ENCODE measurements at regions of chr11 and their contacts with region 1.

Region 1: GRCh38 chr11:57527056-57527631 is 3.4 kb downstream of the TIMM10 start:
- DNase-seq: peak; percentile 55 to 79
- ATAC-seq: peak in 2 of 4 donors; percentile 31 to 39
- H3K4me3 ChIP-seq: no peak overlapping the region
- H3K27ac ChIP-seq: no peak overlapping the region
- H3K4me1 ChIP-seq: peaks cover 15% of the 10 kb centered on the region
- H3K27me3 ChIP-seq: no peaks in the 10 kb centered on the region
- CTCF ChIP-seq: peak; percentile 96

Region 2: DNA sequence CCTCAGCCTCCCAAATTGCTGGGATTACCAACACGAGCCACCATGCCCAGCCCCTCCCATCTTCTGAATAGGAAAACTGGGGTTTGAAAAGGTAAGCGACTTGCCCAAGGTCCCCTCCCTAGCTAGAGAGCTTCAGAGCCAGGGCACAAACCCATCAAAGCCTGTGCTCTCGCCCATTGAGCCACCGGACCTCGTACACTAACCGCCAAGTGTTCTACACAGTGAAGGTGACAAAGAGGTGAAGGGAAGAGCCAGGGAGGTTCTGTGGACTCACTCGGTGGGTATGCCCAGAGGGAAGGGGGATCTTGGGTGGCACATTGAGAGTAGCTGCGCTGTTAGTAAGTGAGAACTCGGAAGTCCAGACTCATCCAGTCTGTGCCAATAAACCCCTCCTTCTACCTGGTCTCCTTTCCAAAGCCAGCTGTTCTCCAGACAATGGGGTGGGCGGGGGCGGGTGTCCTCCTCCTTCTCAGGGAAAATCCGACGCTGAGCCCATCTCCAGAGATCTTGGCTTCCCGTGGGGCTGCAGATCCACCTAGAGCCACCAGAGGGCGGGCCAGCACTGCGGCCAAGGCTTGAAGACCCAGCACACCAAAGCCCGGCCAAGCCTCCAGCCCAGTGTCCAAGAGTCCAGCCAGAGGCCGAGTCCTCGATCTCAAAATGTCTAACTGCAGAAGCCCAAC is 70.0 kb before region 1 on chr11:
- intact Hi-C with region 1: loop called (anchors 1 to 5 kb)
- DNase-seq: peak; percentile 92 to 95
- ATAC-seq: peak; percentile 89 to 96 (median 94)
- H3K4me3 ChIP-seq: peak overlapping the region; percentile 4
- H3K27ac ChIP-seq: no peak overlapping the region
- H3K4me1 ChIP-seq: peaks cover 19% of the 10 kb centered on the region
- H3K27me3 ChIP-seq: peaks cover 0 to 38% (median 18%) of the 10 kb centered on the region in 3 donors
- CTCF ChIP-seq: peak; percentile 99

Region 3: GRCh38 chr11:57480409-57481137 is 46.6 kb before region 1 on chr11:
- intact Hi-C with region 1: loop called in 1 of 2 experiments (anchors 5 kb)
- DNase-seq: peak; percentile 66 to 82
- ATAC-seq: peak; percentile 31 to 46 (median 36)
- H3K4me3 ChIP-seq: no peak overlapping the region
- H3K27ac ChIP-seq: no peak overlapping the region
- H3K4me1 ChIP-seq: peaks cover 10% of the 10 kb centered on the region
- H3K27me3 ChIP-seq: peaks cover 0 to 6% (median 5%) of the 10 kb centered on the region in 3 donors
- CTCF ChIP-seq: peak; percentile 68

Region 4: DNA sequence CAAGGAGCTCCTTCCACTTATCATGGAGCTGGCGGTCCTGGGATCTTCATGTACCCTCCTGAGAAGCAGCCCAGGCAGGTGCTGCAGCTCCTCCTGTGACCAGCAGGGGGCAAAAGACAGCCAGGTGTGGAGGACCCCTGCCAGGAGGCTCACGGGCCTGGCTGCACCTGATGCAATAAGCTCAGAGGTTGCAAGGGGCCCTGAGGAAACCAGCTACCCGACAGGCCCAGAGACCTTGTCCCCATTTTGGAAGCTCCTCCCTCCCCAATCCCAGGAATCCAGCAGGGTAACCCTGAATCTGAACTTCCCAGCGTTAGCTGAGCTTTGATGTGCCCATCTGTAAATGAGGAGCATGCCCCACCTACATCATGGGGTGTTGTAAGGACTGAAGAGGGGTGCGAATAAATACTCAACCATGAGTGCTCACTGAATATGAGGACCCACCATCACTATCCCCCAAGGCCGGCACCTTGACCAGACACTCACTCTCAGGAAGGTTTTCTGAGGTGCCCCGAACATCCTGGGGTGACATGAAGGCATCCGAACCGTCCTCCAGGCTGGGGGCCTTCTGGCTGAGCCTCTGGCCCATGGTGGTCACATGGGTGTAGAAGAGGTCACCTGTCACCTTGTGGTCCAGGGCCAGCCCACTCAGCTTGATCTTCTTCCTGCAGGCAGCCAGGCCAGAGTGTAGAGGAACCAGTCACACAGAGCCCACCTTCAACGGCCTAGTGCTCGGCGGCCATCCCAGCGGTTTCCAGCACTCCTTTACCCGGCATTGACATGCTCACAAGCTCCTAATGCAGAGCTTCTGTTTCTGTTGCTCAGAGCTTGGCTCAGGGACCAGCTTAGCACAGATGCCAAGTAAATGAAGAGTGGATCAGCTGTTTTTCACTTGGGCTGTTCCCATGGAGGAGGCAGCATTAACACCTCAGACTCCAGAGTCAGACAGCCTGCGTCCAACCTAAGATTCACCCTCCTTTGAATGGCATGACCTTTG is 33.3 kb before region 1 on chr11:
- intact Hi-C with region 1: loop called (anchors 2 kb)
- DNase-seq: peak; percentile 46 to 72
- ATAC-seq: peak; percentile 64 to 84 (median 72)
- H3K4me3 ChIP-seq: no peak overlapping the region
- H3K27ac ChIP-seq: peak overlapping the region; percentile 56
- H3K4me1 ChIP-seq: peaks cover 5% of the 10 kb centered on the region
- H3K27me3 ChIP-seq: no peaks in the 10 kb centered on the region
- CTCF ChIP-seq: peak; percentile 86

Region 5: DNA sequence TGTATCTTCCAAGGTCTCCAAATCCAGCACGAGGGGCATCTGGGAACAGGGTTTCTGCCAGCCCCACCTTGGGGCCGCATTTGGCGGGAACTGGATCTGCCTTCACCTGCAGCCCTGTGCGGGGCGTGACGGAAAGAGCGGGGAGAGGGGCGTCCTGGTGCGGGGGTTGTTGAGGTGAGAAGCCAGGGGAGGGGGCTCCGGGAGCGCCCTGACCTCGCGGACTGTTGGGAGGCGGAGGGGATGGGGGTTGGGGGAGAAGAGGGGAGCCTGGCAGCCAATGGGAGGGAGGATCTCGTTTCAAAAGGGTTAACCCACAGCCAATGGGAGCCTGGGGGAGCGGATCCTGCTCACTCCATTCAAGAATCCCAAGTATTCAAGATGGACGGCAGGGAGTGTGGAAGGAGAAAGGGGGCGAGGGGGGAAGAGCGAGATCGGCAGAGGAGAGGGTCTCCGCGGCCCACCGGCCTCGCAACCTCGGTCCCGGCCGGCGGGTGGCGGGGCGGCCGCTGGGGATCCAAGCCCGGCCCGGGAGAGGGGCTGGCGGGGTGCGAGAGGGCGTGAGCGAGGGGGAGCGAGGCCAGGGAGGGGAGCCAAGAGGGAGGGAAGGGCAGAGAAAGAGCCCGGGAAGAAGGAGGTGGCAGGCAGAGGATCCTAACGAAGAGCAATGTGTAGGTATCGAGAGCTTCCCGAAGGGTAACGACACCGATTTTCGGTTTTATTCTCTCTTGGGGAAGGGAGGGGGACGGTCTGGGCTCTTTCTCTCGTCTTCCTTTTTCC is 111.0 kb after region 1 on chr11:
- intact Hi-C with region 1: no loop called
- DNase-seq: peak; percentile 61 to 70
- ATAC-seq: peak; percentile 51 to 79 (median 72)
- H3K4me3 ChIP-seq: peak overlapping the region; percentile 68
- H3K27ac ChIP-seq: no peak overlapping the region
- H3K4me1 ChIP-seq: peaks cover 8% of the 10 kb centered on the region
- H3K27me3 ChIP-seq: peaks cover 0 to 32% (median 8%) of the 10 kb centered on the region in 3 donors
- CTCF ChIP-seq: no peak